ENCODE measurements at regions of chr9 and their contacts with region 1.

Region 1: GRCh38 chr9:78213712-78214111 is 22.2 kb upstream of the CEP78 start:
- DNase-seq: no peak
- H3K4me3 Mint-ChIP-seq: no peak overlapping the region
- H3K27ac Mint-ChIP-seq: no peak overlapping the region
- H3K4me1 Mint-ChIP-seq: peaks cover 31% of the 10 kb centered on the region
- H3K27me3 Mint-ChIP-seq: no peaks in the 10 kb centered on the region

Region 2: DNA sequence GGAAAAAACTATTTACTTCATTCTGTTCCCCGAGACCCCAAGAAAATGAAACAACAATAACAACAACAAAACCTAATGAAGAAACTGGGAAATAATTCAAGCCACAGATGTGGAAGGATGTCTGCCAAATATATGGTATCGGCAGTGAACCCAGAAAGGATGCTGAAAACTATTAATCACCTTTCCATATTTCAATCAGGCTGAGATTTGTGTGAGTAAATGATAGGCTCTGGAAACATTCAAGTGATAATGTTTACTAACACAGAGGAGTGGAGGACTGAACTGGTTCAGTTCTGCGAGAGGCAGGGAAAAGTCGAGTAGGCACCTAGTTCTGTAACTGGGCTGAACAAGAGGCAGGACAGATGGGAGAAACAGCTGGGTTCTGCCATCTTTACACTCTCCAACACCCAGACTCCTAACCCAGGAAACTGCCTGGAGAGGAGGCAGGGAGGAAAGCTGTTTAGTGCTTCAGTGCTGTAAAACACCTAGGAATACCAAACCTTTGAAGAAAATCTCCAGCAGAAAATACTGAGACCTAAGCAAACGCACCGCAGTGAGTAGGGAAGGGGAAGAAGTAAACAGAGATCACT is 468.8 kb before region 1 on chr9:
- CTCF ChIA-PET with region 1: no interaction called
- intact Hi-C with region 1: loop called (anchors 5 kb)
- DNase-seq: no peak
- H3K4me3 Mint-ChIP-seq: no peak overlapping the region
- H3K27ac Mint-ChIP-seq: no peak overlapping the region
- H3K4me1 Mint-ChIP-seq: peaks cover 45% of the 10 kb centered on the region
- H3K27me3 Mint-ChIP-seq: no peaks in the 10 kb centered on the region

Region 3: DNA sequence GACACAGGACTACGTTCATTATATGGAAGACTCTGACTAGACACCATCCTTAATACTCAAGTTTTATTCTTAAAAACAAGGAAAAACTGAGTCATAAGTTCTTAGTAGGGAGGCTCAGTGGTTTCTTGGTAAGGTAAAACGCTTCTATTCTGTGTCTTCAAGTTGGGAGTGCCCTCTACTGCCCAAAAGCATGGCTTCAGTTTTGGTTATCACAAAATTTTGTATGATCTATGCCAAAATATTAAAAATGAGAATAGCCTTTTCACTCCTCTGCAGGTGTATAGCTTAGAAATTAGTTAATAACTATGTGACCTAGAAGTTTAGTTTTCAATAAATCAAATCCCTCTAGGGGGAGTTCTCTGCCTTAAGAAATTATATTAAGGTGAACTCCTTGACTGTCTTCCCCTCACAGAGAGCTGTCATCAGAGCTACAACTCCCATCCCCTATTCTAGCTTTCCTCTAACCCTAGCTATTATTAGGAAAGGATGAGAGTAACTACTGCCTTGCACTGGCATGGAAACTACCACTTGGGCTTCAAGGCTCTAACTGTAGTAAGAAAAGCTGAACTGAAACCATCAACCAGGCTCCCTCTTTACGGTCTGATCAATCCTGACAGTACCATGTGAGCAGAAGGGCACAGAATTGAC is 371.8 kb before region 1 on chr9:
- CTCF ChIA-PET with region 1: interaction called, 3 read pairs
- intact Hi-C with region 1: loop called (anchors 10 kb)
- DNase-seq: no peak
- H3K4me3 Mint-ChIP-seq: no peak overlapping the region
- H3K27ac Mint-ChIP-seq: no peak overlapping the region
- H3K4me1 Mint-ChIP-seq: peaks cover 7% of the 10 kb centered on the region
- H3K27me3 Mint-ChIP-seq: no peaks in the 10 kb centered on the region

Measured in activated naive CD4-positive, alpha-beta T cell treated with anti-CD3 and anti-CD28 coated beads for 36 hours (primary cell).